Ascending aorta (tissue), 2 donors: ENCODE measurements at regions of chr11 and their contacts with region 1.

Region 1: DNA sequence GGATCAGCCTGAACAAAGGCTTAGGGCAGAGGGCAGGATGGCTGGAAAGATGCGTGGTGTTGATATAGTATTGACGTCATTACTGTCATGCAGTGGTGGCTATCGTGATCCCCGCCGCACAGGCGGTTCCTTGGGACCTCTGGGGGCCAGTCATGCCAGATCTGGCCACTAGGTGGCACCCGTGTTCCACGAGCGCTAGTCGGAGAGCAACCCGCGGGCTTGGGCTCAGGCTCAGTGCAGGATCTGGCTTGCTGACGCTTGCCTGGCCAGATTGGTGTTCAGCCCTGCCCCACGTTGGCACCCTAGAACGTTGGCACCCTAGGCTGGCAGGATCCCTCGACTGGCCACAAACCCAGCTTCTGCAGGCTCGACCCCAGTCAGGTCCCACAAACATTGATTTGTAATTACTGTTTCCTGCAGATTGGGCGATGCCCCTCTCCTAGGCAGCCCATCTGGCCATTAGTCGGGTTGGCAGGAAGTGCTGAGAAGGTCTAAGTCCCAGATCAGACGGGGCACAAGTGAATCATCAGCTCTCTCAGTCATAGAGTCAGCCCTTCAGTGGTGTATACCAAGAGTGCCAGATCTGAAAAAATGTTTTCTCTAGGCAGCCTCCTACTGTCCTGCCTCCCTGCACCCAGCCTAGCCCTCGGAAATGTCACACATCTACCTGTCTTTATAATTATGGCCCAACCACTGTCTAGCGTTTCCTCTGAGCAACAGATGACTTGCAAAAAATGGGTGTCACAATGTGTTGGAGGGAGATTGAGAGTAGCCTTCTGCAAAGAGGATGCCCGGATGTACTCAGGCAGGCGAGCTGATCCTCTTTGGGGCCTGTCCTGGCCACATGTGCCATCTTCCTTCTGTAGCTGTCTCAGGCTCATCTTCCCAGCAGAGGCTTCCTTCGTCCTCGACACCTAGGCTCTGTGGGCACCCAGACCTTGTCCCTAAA is 315.3 kb downstream of the TMEM135 start:
- DNase-seq: peak; percentile 33 to 92
- H3K4me3 ChIP-seq: peak overlapping the region in 1 of 2 donors; percentile 30
- H3K27ac ChIP-seq: peak overlapping the region; percentile 47 to 50
- H3K4me1 ChIP-seq: peaks cover 0 to 15% of the 10 kb centered on the region in 2 donors
- H3K27me3 ChIP-seq: no peaks in the 10 kb centered on the region
- CTCF ChIP-seq: peak; percentile 97 to 99 (median 99)

Region 2: DNA sequence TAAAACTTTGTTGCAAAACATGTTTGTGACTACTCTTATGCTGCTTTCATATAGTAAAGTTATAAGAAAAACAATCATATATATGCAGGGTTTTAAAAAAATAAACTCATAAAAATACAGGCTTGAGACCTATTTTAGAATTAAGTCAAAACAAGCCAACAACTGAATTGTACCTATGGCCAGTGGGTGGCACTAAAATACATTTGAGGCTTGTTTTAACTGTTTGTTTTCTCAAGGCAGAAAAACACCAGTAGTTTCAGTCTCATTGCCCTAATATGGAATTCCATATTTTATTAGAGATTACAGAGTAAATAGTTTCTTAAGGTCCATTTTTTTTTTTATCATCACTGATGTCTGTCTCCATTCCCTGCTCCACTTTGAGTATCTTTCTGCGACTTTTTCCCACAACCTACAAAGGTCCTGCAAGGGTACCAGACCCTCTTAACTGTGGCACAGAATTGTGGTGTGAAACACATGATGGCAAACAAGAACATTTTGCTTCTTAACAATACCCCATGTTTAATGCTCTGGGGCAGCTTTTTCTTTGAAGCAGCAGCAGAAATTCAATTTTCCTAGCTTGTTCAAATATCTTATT is 1658.5 kb before region 1 on chr11:
- intact Hi-C with region 1: no loop called
- DNase-seq: no peak
- H3K4me3 ChIP-seq: no peak overlapping the region
- H3K27ac ChIP-seq: no peak overlapping the region
- H3K4me1 ChIP-seq: no peaks in the 10 kb centered on the region
- H3K27me3 ChIP-seq: no peaks in the 10 kb centered on the region
- CTCF ChIP-seq: peak in 2 of 3 experiments; percentile 24 to 52

Region 3: DNA sequence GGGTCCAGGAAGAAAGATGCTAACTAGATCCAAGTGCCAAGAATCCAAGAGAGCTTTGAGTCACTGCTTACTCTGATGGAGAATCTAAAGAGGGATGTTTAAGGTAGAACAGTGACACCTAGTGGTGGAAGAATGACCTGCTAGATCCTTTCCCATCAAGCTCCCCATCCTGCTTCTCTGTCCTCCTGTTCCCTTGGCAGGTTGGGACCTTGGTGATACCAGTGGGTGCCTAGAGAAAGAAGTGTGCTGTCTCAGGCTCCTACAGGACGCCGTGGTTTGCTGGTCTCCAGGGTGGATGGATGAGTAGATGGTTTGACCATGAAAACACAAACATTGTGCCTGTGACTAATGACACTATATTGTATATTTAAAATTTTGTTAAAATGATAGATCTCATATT is 68.4 kb after region 1 on chr11:
- intact Hi-C with region 1: loop called (anchors 1 kb)
- DNase-seq: peak in 1 of 2 donors; percentile 70
- H3K4me3 ChIP-seq: no peak overlapping the region
- H3K27ac ChIP-seq: no peak overlapping the region
- H3K4me1 ChIP-seq: peaks cover 3 to 9% of the 10 kb centered on the region in 2 donors
- H3K27me3 ChIP-seq: no peaks in the 10 kb centered on the region
- CTCF ChIP-seq: peak; percentile 61 to 75 (median 70)

Region 4: DNA sequence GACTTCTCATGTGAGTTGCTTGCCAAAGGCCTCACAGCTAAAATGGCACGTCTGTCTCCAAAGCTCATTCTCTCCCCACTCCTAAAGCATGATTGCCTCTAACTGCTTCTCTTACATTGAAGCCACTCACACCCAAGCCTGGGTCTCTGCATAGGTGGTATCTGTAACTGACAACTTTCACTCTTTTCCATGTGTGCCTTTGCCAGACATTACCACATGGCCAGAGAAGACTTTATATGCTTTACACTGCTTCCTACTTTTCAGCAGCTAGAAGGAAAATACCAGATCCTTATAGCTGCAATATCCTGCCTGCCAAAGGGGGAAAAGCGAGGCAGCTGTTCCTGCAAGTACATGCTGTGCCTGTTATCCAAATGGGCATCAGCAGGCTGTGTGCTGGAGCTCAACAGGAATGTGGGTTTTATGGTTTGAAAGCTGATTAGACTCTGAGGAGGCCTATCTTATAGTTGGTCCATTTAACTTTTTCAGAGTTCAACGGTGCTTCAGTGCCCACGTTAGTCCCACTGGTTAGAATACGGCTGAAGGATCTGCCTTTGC is 275.1 kb after region 1 on chr11:
- intact Hi-C with region 1: no loop called
- DNase-seq: no peak
- H3K4me3 ChIP-seq: no peak overlapping the region
- H3K27ac ChIP-seq: no peak overlapping the region
- H3K4me1 ChIP-seq: no peaks in the 10 kb centered on the region
- H3K27me3 ChIP-seq: no peaks in the 10 kb centered on the region
- CTCF ChIP-seq: no peak